Heart right ventricle (tissue), 16 donors: ENCODE measurements at regions of chr12 and their contacts with region 1.

Region 1: DNA sequence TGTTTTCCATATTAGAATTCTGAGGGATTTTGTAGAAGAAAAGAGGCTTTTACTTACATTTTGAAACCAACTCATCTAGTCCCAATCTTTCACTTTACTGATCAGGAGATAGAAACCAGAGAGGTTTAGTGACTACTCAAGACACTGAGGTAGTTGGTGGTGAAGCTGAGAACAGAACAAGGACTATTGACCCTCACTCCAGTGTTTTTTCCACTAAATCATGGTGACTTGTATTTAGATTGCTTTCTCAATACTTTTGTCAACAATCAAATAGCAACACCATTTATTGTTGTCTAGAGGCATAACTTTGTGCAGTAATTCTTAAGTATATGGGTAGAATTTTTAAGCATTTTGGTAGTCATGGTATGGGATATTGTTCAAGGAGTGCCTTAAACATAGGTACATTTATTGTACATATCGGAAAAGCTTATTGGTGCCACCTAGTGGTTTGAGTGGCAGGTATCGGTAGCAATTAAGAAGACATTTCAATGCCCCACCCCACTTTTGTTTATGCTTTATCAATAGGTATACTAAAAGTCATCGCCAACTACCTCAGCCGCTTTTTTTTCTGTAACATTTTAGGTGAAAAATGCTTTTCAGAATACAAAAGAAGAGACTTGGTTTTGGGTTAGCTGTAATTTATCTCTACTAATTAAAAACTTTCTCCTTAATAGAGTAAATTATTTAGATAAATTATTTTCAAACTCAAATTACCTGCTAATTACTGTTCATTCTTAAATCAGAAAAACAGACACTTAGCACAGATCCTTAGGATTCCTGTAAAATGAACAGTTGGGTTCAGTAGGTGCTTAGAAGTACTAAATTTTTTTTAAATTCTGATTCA is 47.3 kb upstream of the PAWR start:
- DNase-seq: peak in 1 of 2 donors; percentile 18
- ATAC-seq: no peak
- H3K4me3 ChIP-seq: no peak overlapping the region
- H3K27ac ChIP-seq: no peak overlapping the region
- H3K4me1 ChIP-seq: peaks cover 0 to 6% (median 0%) of the 10 kb centered on the region in 9 donors
- H3K27me3 ChIP-seq: peaks cover 0 to 13% (median 0%) of the 10 kb centered on the region in 7 donors
- CTCF ChIP-seq: peak; percentile 44 to 78 (median 68)

Region 2: DNA sequence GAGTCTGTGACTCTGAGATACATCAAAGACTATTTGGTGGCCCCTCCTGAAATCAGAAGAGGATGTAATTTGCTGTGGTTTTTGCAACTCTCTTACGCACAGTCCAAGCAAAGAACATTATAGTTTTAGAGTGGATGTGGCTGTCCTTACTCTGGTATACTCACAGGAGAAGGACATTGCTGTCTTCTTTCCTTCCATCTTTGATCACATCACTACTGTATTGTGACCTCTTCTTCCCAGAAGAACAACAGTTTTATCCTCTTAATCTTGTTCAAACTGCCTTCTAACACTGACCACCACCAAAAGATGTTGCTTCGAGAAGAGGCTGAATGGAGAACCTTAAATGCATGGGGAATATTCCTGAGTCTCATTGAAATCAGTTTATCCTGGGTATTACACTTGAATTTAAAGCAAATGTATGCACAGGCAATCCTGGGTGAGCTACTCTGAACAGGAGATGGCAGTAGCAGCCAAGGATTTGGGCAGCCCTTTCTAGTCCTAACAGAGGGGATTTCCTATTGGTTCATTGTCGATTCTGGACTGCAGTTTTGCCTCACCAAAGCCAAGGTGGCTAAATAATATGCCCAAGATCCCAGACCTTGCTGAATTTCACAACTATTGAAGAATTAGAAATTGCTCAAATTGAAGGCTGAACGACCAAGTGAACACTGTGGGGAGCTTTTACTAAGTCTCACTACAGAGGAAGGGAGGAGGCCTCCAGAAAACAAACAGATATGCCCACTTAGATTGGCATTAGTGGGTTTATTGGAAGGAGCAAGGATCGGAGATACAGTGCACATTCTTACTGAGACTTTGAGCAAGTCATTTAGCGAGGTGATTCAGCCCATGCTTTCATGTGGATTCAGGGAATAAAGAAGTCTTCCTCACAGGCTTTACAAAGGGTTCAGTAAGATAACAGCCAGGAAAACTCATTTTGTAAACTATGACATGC is 330.1 kb before region 1 on chr12:
- intact Hi-C with region 1: loop called in 2 of 10 experiments (anchors 10 kb)
- DNase-seq: peak in 1 of 2 donors; percentile 37
- ATAC-seq: peak in 7 of 8 donors; percentile 51 to 86 (median 63)
- H3K4me3 ChIP-seq: no peak overlapping the region
- H3K27ac ChIP-seq: no peak overlapping the region
- H3K4me1 ChIP-seq: peaks cover 0 to 7% (median 0%) of the 10 kb centered on the region in 9 donors
- H3K27me3 ChIP-seq: no peaks in the 10 kb centered on the region
- CTCF ChIP-seq: peak in 8 of 9 donors; percentile 25 to 69 (median 54)

Region 3: GRCh38 chr12:79420146-79420618 is 317.9 kb before region 1 on chr12:
- intact Hi-C with region 1: loop called in 1 of 10 experiments (anchors 10 kb)
- DNase-seq: no peak
- ATAC-seq: peak in 2 of 8 donors; percentile 29 to 44
- H3K4me3 ChIP-seq: no peak overlapping the region
- H3K27ac ChIP-seq: no peak overlapping the region
- H3K4me1 ChIP-seq: peaks cover 0 to 15% (median 0%) of the 10 kb centered on the region in 9 donors
- H3K27me3 ChIP-seq: no peaks in the 10 kb centered on the region
- CTCF ChIP-seq: peak in 7 of 9 donors; percentile 20 to 56 (median 36)

Region 4: DNA sequence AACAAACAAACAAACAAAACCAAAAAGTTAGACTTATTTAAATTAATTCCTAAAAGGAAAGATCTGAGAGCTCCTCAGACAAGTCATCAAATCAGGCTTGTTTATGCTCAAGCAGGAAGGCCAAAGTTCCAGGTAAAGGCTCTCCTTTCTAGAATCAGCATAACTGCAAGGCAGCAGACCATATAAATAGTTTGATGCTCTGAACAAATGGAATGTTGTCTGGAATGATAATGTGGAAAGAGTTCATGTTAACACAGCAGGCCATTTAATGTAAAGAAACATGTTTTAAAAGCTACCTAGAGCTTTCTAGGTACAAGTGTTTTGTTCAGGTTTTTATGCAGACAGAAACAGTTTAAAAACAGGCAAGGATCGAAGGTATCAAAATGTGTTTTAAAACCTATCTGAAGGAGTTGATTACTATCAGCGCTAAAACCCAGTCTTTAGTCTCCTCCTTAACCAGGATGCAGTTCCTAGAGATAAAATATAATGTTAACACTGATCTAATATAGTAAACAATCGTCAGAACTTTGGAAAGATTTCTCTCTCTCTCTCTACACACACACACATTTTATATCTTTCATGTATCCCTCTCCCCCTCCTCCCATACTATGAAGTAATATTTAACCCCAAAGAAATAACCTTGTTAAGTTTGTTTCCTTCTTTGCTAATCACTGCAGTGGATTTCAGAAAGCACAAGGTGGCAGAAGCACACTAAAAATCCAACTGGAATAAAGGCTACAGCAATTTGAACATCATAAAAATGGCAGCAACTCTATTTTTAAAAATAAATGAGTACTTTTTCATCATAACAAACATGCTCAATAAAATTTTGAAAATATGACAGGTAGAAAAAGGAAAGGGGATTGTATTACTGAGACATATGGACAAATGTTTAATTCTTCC is 182.8 kb before region 1 on chr12:
- intact Hi-C with region 1: loop called in 9 of 10 experiments (anchors 2 to 10 kb)
- DNase-seq: peak in 1 of 2 donors; percentile 15
- ATAC-seq: peak in 2 of 8 donors; percentile 40 to 47
- H3K4me3 ChIP-seq: no peak overlapping the region
- H3K27ac ChIP-seq: no peak overlapping the region
- H3K4me1 ChIP-seq: peaks cover 0 to 47% (median 12%) of the 10 kb centered on the region in 9 donors
- H3K27me3 ChIP-seq: no peaks in the 10 kb centered on the region
- CTCF ChIP-seq: peak; percentile 25 to 79 (median 58)